ENCODE measurements at regions of chr22 and their contacts with region 1.

Region 1: DNA sequence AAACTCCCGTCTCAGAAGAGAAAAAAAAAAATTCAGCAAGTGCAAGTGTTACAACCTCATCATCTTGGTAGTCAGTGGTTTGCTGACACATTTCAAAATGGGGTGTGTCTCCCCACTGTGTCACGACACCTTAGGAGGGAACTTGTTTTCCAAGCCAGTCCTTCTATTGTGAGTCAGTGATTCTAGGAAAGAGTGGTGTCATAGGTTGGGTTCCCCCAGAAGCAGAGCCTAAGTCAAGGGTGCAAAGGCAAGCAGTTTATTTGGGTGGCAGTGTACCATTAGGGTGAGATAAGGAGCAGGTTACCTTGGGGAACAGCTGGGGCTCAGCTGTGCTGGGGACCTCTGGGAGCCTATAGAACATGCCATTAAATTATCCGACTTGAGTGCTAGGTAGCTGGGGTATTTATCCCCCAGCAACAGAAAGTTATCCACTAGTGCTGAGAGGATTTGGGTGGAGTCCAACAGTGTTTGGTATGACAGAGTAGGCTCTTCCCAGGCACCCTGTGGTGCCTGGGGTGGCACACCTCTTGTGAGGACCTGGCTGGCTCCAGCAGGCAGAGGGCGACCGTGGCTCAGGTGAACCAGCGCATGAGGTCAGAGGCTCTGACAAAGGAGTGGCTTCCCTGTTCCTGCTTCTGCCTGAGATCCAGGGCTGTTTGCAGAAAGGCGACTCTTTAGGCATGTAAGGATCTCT is 41.7 kb downstream of the KIAA1671 start:
- DNase-seq: peak; percentile 70
- ATAC-seq: peak; percentile 37; the same call in 1 of the 2 replicates
- H3K4me3 ChIP-seq: no peak overlapping the region
- H3K27ac ChIP-seq: peak overlapping the region; percentile 100
- H3K4me1 ChIP-seq: peaks cover 72% of the 10 kb centered on the region
- H3K27me3 ChIP-seq: no peaks in the 10 kb centered on the region
- CTCF ChIP-seq: peak; percentile 53

Region 2: DNA sequence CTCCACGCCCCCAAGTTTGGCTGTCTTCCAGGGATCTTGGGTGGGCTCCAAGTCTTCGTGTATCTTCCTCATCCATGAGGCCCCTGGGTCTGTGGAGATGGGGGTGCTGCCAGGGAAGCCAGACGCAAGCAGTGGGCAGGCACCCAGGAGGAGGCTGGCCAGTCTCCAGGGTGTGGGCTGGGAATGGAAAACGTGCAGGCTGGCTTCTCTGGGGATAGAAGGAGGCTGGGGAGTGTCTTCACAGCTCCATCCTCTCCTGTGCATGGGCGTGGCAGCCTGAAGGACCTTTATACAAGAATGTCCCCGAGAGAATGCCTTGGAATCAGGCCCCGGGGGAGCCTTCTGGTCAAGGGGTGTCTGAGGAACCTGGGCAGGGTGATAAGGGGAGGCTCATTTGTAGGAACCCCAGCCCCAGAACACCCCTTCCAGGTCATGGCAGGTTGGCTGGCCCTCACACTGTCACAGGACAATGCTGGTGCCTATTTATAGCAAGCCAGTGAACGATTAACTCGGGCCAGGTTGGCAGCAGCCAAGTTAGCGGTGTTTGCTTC is 174.2 kb before region 1 on chr22:
- CTCF ChIA-PET with region 1: no interaction called
- POLR2A ChIA-PET with region 1: no interaction called
- intact Hi-C with region 1: no loop called
- DNase-seq: peak; percentile 4
- ATAC-seq: no peak
- H3K4me3 ChIP-seq: no peak overlapping the region
- H3K27ac ChIP-seq: no peak overlapping the region
- H3K4me1 ChIP-seq: no peaks in the 10 kb centered on the region
- H3K27me3 ChIP-seq: no peaks in the 10 kb centered on the region
- CTCF ChIP-seq: no peak

Region 3: GRCh38 chr22:24901462-24901861 is 92.8 kb before region 1 on chr22:
- CTCF ChIA-PET with region 1: no interaction called
- POLR2A ChIA-PET with region 1: no interaction called
- intact Hi-C with region 1: no loop called
- DNase-seq: no peak
- ATAC-seq: no peak
- H3K4me3 ChIP-seq: no peak overlapping the region
- H3K27ac ChIP-seq: no peak overlapping the region
- H3K4me1 ChIP-seq: no peaks in the 10 kb centered on the region
- H3K27me3 ChIP-seq: no peaks in the 10 kb centered on the region
- CTCF ChIP-seq: no peak

Region 4: GRCh38 chr22:24951942-24952836 is 42.0 kb before region 1 on chr22 and contains the start of gene KIAA1671:
- CTCF ChIA-PET with region 1: no interaction called
- POLR2A ChIA-PET with region 1: no interaction called
- intact Hi-C with region 1: loop called (anchors 2 kb)
- DNase-seq: peak; percentile 85
- ATAC-seq: peak; percentile 86
- H3K4me3 ChIP-seq: peak within 1 kb of the TSS; percentile 98
- H3K27ac ChIP-seq: peak within 1 kb of the TSS; percentile 88
- H3K4me1 ChIP-seq: peaks cover 13% of the 10 kb centered on the region
- H3K27me3 ChIP-seq: no peaks in the 10 kb centered on the region
- CTCF ChIP-seq: peak; percentile 91
- total RNA-seq, gene KIAA1671: 18.6 and 22.1 TPM in 2 replicates

Region 5: GRCh38 chr22:25007444-25008106 is 13.4 kb after region 1 on chr22:
- CTCF ChIA-PET with region 1: no interaction called
- POLR2A ChIA-PET with region 1: interaction called, 15 read pairs
- intact Hi-C with region 1: no loop called
- DNase-seq: no peak
- ATAC-seq: no peak
- H3K4me3 ChIP-seq: no peak overlapping the region
- H3K27ac ChIP-seq: no peak overlapping the region
- H3K4me1 ChIP-seq: peaks cover 9% of the 10 kb centered on the region; the same call in 1 of the 2 replicates
- H3K27me3 ChIP-seq: no peaks in the 10 kb centered on the region
- CTCF ChIP-seq: no peak

Region 6: GRCh38 chr22:25027959-25028840 is 34.0 kb after region 1 on chr22:
- CTCF ChIA-PET with region 1: no interaction called
- POLR2A ChIA-PET with region 1: no interaction called
- intact Hi-C with region 1: loop called (anchors 5 kb)
- DNase-seq: peak; percentile 11
- ATAC-seq: no peak
- H3K4me3 ChIP-seq: no peak overlapping the region
- H3K27ac ChIP-seq: peak overlapping the region; percentile 94
- H3K4me1 ChIP-seq: peaks cover 27% of the 10 kb centered on the region
- H3K27me3 ChIP-seq: no peaks in the 10 kb centered on the region
- CTCF ChIP-seq: peak; percentile 48